Left cardiac atrium (tissue), 4 donors: ENCODE measurements at regions of chr22 and their contacts with region 1.

Region 1: DNA sequence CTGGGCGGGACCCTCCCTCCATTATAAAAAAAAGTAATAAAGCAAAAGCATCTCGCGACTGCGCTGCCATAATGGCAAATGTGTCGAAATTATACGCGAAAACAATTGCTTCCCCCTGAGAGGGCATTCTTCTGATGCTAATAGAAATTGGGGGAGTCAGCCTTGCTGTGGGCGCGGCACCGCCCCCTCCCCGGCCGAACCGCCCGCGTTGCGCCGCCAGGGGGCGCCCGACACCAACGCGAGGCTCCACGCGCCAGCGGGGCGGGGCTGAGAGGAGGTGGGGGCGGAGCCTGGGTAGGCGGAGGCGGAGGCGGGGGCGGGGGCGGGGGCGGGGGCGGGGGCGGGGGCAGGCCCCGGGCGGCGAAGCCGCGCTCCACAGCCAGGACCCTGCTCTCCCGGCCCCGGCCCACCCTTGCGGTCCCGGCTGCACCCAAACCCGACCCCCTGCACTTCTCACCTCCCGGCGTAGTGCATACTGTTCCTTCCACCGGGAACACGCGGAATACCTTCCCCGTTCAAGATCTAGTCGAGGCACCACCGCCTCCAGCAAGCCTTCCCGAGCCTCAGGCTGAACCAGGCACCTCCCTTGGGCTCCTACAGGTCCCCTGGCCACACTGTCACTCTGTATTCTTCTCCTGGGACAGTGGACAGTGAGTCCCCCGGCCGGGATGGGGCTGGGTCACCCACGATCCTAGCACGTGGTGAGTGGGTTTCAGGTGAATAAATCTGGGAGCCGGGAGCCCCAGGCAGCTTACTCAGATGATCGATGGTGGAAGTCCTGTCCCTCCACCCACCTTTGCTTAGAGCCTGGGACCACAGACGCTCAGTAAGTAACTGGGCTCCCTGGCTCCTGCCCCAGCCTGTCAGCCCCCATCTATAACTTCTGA is 15.5 kb upstream of the UPK3A start:
- DNase-seq: peak; percentile 87
- ATAC-seq: peak; percentile 86 to 91

Region 2: DNA sequence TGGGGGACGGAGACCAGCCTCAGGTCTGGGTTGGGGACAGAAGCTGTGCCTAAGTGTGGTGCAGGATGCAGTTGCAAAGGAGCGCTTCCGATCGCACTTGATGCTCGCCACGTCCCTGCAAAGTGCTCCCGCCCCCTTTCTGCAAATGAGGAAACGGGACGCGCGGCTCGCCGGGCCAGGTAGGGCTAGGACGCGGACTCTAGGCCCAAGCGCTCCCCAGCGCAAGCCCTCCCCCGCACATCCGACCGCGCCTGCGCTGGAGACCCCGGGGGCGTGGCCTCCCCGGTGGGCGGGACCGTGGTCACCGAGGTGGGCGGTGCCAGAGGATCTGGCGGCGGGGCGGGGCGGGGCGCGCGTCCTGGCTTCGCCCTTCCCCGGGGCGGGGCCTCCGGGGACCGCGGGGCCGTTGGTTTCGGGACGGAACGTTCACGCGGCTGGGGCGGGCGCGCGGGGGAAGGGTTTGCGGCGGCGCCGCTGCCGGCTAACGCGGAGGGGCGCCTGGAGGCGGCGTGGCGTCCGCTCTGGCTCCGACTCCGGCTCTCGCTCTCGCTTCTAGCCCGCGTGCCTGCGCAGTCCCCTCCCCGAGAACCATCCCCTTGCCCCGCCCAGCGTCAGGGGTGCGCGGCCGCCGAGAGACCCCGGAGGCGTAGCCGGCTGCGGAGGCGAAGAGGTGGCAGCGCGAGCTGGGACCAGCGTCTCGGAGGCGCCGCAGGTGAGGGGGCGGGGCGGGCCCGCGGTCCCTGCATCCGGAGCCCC is 40.4 kb after region 1 on chr22 and contains the start of gene FAM118A:
- intact Hi-C with region 1: loop called in 1 of 2 experiments (anchors 5 kb)
- DNase-seq: peak; percentile 89
- ATAC-seq: peak; percentile 95 to 97
- total RNA-seq, gene FAM118A: 20.9 to 23.5 TPM

Region 3: GRCh38 chr22:45435544-45436139 is 166.4 kb after region 1 on chr22:
- intact Hi-C with region 1: loop called (anchors 2 kb)
- DNase-seq: peak; percentile 91
- ATAC-seq: peak; percentile 93 to 95

Region 4: GRCh38 chr22:45553351-45554039 is 284.3 kb after region 1 on chr22:
- intact Hi-C with region 1: loop called (anchors 5 kb)
- DNase-seq: peak; percentile 83
- ATAC-seq: peak; percentile 46 to 59